Activated B cell treated with CpG ODN at 0.5 μM for 24 hours (primary cell): ENCODE measurements at regions of chr15 and their contacts with region 1.

Region 1: GRCh38 chr15:62060113-62060895 is at the start of gene VPS13C:
- DNase-seq: peak; percentile 93
- ATAC-seq: peak; percentile 84
- H3K4me3 Mint-ChIP-seq: peak within 1 kb of the TSS; percentile 94
- H3K27ac Mint-ChIP-seq: peak within 1 kb of the TSS; percentile 94
- H3K4me1 Mint-ChIP-seq: peaks cover 40% of the 10 kb centered on the region
- H3K27me3 Mint-ChIP-seq: no peaks in the 10 kb centered on the region
- CTCF ChIP-seq: peak; percentile 42
- total RNA-seq, gene VPS13C: 140 and 172 TPM in 2 replicates

Region 2: GRCh38 chr15:62026487-62027262 is 33.6 kb before region 1 on chr15:
- CTCF ChIA-PET with region 1: interaction called, 9 read pairs
- POLR2A ChIA-PET with region 1: interaction called, 36 read pairs
- intact Hi-C with region 1: loop called (anchors 1 kb)
- DNase-seq: no peak
- ATAC-seq: peak; percentile 76
- H3K4me3 Mint-ChIP-seq: peak overlapping the region; percentile 48
- H3K27ac Mint-ChIP-seq: peak overlapping the region; percentile 74
- H3K4me1 Mint-ChIP-seq: peaks cover 40% of the 10 kb centered on the region
- H3K27me3 Mint-ChIP-seq: no peaks in the 10 kb centered on the region
- CTCF ChIP-seq: no peak

Region 3: DNA sequence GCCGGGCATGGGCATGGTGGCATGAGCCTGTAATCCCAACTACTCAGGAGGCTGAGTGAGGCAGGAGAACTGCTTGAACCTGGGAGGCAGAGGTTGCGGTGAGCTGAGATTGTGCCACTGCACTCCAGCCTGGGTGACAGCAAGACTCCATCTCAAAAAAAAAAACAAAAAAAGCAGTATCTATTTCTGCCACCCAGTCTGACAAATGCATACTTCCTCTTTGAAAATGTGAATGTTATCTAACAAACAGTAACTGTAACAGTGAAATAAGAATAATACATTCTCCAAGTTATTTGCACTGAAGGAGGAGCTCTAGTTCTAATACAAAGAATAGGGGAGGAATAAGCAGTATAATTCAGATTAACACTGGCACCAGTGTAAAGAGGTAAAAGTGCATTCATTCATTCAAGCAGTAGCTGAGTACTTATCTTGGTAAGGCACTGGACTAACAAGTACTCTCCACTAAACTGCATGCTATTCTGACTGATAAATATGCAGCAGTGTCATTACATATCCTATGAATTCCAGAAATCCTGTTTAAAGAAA is 12.9 kb before region 1 on chr15:
- CTCF ChIA-PET with region 1: interaction called, 3 read pairs
- POLR2A ChIA-PET with region 1: interaction called, 6 read pairs
- intact Hi-C with region 1: loop called (anchors 1 kb)
- DNase-seq: no peak
- ATAC-seq: peak; percentile 67
- H3K4me3 Mint-ChIP-seq: peak overlapping the region; percentile 44
- H3K27ac Mint-ChIP-seq: peak overlapping the region; percentile 84
- H3K4me1 Mint-ChIP-seq: peaks cover 55% of the 10 kb centered on the region
- H3K27me3 Mint-ChIP-seq: no peaks in the 10 kb centered on the region
- CTCF ChIP-seq: no peak

Region 4: DNA sequence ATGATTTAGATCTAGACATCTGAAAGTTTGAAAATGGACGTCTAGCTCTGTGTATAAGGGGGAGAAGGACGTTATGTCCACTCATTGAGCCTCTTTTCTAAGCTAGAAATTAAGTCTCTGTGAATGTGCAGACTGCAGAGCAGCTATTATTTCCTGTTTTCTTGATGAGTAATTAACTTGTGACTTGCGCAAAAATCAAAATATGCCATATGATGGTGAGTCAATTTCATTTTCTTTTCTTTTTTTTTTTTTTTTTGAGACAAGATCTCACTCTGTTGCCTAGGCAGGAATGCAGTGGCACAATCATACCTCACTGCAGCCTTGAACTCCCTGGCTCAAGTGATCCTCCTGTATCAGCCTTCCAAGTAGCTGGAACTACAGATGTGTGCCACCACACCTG is 1075.5 kb after region 1 on chr15:
- CTCF ChIA-PET with region 1: no interaction called
- POLR2A ChIA-PET with region 1: no interaction called
- intact Hi-C with region 1: no loop called
- DNase-seq: no peak
- ATAC-seq: no peak
- H3K4me3 Mint-ChIP-seq: no peak overlapping the region
- H3K27ac Mint-ChIP-seq: no peak overlapping the region
- H3K4me1 Mint-ChIP-seq: peaks cover 12% of the 10 kb centered on the region
- H3K27me3 Mint-ChIP-seq: no peaks in the 10 kb centered on the region
- CTCF ChIP-seq: no peak